HEK293 (cell line): ENCODE measurements at regions of chr12 and their contacts with region 1.

Region 1: DNA sequence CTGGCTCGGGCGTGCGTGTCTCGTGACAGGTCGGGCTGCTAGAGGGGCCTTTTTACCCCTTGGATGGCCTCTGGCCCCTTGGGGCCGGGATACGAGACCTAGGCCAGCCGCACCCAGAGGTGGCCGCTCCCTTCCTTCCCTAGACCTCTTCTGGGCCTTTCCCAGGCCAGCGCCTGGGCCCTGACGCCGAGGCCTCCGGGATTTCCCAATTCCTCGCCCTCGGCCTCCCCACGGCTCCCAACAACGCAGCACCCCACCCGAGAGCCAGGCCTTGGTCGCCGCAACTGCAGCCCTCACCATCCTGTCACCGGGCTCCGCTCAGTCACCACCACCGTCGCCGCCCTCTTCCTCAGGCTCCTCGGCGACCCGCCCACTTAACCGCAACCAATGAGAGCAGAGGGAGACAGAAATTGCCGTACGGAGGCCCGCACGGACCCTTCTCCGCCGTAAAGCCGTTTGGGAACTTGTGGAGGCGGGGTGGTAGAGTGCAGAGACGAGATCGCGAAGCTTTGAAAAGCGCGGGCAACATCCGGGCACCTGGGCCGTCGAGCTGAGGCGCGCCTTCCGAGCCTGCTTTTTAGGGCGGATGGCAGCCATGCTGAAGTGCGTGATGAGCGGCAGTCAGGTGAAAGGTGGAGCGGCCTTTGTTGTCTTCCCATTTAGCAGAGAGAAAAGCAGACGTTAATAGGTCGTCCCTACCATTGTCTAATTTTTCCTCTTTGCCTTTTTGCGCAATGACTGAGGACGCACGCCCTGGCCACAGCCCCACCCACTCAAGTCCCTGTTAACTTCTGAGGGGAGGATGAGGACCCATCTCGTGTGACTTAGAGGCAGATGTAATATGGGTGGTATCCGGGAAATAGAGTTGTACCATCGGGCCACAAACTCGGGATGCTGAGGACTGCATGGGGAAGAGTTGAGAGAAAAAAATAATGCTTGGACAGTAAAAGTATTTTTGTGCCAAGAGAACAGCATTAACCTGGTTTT is at the starts of genes RAD9B and VPS29:
- H3K4me3 ChIP-seq: peak within 1 kb of the TSS; percentile 90
- H3K27ac ChIP-seq: peak within 1 kb of the TSS; percentile 89
- H3K4me1 ChIP-seq: peaks cover 9% of the 10 kb centered on the region
- CTCF ChIP-seq: peak; percentile 24; the same call in 1 of the 2 replicates

Region 2: GRCh38 chr12:110468212-110469048 is 33.6 kb before region 1 on chr12 and contains the starts of genes FAM216A and GPN3:
- CTCF ChIA-PET with region 1: interaction called, 4 read pairs
- POLR2A ChIA-PET with region 1: interaction called, 44 read pairs
- H3K4me3 ChIP-seq: peak within 1 kb of the TSS; percentile 78
- H3K27ac ChIP-seq: peak within 1 kb of the TSS; percentile 93
- H3K4me1 ChIP-seq: peaks cover 5% of the 10 kb centered on the region; the same call in 1 of the 2 replicates
- CTCF ChIP-seq: no peak